Kidney (tissue), 22 donors: ENCODE measurements at regions of chrX and their contacts with region 1.

Region 1: DNA sequence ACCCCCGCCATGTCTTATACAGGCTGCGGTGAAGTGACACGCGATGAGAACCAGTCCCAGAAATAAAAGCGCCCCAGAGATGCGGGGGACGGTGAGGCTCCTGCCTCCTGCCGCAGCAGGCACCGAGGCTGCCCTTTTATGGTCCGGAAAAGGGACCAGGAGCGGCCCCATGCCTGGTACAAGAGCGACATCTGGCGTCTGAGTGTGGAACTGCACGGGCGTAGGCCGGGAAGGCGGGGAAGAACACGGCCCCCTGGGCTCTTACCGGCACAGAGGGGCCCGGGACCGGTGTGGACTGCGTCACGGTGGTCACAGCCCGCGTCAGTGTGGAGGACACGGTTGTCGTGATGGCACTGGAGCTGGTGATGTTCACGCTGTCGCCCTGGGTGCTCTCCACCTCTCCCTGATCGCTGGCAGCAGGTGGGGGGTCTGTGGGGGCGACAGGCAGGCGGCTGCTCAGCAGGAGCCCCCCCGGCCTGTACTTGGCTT is 8.9 kb upstream of the RENBP start:
- DNase-seq: peak; percentile 77 to 88 (median 81)
- H3K4me3 ChIP-seq: no peak overlapping the region
- H3K27ac ChIP-seq: no peak overlapping the region
- H3K4me1 ChIP-seq: peaks cover 0 to 4% (median 0%) of the 10 kb centered on the region in 3 donors
- H3K27me3 ChIP-seq: no peaks in the 10 kb centered on the region
- CTCF ChIP-seq: peak; percentile 88

Region 2: DNA sequence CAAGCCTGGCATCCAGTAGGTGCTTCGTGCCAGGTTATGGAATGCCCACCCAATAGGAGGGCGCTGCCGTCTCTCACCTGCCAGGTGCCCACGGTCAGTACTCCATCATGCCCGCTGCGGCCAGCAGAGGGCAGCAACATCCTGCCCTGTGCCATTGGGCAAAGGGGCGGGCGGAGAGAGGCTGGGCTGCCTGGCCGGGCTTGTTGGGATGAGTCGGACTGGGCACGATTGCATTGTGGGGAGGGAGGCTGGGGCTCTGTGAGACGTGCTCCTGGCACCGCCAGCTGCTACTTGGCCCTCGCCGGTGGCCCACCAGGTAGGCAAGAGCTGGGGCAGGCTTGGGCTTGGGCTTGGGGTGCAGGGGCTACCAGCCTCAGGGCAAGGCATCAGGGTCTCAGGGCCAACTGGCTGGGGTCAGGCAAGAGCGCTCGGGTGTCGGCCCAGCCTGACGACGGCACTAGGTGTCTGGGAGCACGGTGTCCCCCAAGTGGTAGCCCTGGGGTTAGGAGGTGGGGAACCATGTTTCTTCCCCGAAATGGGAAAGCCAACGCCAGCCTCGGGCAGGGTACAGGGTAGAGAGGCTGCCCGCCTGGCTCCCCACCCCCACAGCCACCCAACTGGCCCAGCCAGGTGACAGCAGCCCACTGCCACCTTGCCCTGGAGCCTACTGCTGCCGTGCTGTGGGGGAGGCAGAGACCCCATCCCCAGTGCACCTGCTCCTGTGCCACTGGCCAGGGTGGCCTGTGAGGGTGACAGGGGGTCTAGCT is 189.2 kb before region 1 on chrX and contains the start of gene PLXNB3:
- intact Hi-C with region 1: loop called (anchors 10 kb)
- DNase-seq: peak; percentile 66 to 90 (median 80)
- H3K4me3 ChIP-seq: no peak within 1 kb of the TSS
- H3K27ac ChIP-seq: no peak within 1 kb of the TSS
- H3K4me1 ChIP-seq: no peaks in the 10 kb centered on the region
- H3K27me3 ChIP-seq: no peaks in the 10 kb centered on the region
- CTCF ChIP-seq: peak; percentile 76
- total RNA-seq, gene PLXNB3: 5.6 TPM